Posterior vena cava (tissue), 2 donors: ENCODE measurements at regions of chr18 and their contacts with region 1.

Region 1: DNA sequence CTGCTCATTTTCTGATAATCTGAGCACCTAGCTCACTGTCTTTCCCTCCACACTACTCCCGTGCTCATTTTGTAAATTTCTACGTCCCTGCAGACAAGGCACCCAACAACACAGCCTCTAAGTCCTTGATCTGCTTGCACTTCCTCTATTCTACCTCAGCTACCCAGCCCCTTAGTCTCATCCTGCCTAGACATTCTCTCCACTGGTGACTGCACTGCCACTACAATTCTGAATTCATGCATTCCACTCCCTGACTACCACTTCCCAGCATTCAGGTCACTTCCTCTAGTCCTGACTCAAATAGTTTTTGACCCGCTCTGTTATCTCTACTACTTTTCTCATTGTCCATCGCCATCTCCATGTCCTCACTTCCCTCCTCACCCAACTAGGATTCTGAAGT is 155.7 kb downstream of the DYM start:
- DNase-seq: no peak

Region 2: GRCh38 chr18:48099481-48100164 is 1205.1 kb before region 1 on chr18:
- intact Hi-C with region 1: loop called in 1 of 2 experiments (anchors 5 kb)
- DNase-seq: no peak

Region 3: GRCh38 chr18:49230326-49230725 is 74.4 kb before region 1 on chr18:
- intact Hi-C with region 1: loop called in 1 of 2 experiments (anchors 2 kb)
- DNase-seq: no peak

Region 4: GRCh38 chr18:49500201-49500921 is 195.6 kb after region 1 on chr18:
- intact Hi-C with region 1: no loop called
- DNase-seq: peak; percentile 55

Region 5: GRCh38 chr18:50507120-50507590 is 1202.4 kb after region 1 on chr18:
- intact Hi-C with region 1: no loop called
- DNase-seq: peak; percentile 80